HCT116 (cell line): ENCODE measurements at regions of chr2 and their contacts with region 1.

Region 1: DNA sequence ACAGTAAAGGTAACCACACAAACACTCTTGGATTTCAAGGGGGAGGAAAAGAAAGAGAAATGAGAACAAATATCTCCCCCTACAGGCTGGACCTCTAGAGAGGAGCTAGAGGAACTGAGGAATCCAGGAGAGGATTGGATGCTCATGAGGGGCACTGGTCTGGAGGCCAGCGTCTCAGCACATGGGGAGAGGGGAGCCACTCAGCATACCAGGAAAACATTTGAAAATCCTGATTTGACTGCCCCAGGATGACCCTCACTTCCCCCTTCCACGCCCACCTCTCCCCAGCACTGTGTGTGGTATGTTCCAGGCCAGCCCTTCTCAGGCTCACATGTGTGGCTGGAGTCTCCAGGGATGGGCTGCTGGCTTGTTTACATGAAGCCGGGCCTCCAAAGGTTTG is 396.8 kb upstream of the ID2 start:
- DNase-seq: peak; percentile 7
- ATAC-seq: peak; percentile 63
- H3K4me3 ChIP-seq: no peak overlapping the region
- H3K27ac ChIP-seq: no peak overlapping the region
- H3K4me1 ChIP-seq: peaks cover 0 to 9% of the 10 kb centered on the region in 2 experiments; a peak in 1 of 4 replicates
- H3K27me3 ChIP-seq: no peaks in the 10 kb centered on the region
- CTCF ChIP-seq: peak; percentile 4 to 51 (median 38); a peak in 4 of 6 replicates
- POLR2A ChIP-seq: no peak
- RAD21 ChIP-seq: peak; percentile 65

Region 2: DNA sequence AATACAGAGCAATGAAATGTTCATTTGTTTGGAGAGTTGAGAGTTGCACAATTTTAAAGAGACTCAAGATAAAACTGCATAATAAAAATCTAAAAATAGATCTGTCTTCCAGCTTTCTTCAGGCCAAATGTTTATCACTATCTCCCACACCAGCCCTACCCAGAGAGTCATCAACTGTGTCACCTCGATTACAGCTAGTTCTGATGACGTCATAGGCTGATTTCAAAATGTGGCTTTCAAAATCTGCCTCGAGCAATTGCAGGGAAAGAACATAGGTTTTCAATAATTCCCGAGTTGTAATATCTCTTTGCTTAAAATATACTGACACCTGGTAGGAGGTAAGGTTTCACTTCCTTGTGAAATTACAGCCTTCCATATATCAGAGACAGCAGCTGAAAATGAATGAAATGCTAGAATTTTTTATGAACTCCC is 280.8 kb before region 1 on chr2:
- CTCF ChIA-PET with region 1: no interaction called
- POLR2A ChIA-PET with region 1: no interaction called
- RAD21 ChIA-PET with region 1: no interaction called
- intact Hi-C with region 1: loop called (anchors 5 kb)
- DNase-seq: no peak
- ATAC-seq: no peak
- H3K4me3 ChIP-seq: no peak overlapping the region
- H3K27ac ChIP-seq: no peak overlapping the region
- H3K4me1 ChIP-seq: no peaks in the 10 kb centered on the region
- H3K27me3 ChIP-seq: no peaks in the 10 kb centered on the region
- CTCF ChIP-seq: no peak
- POLR2A ChIP-seq: no peak
- RAD21 ChIP-seq: no peak

Region 3: GRCh38 chr2:8049851-8050571 is 235.1 kb before region 1 on chr2:
- CTCF ChIA-PET with region 1: no interaction called
- POLR2A ChIA-PET with region 1: no interaction called
- RAD21 ChIA-PET with region 1: no interaction called
- intact Hi-C with region 1: no loop called
- DNase-seq: no peak
- ATAC-seq: peak; percentile 47; the same call in 1 of the 2 replicates
- H3K4me3 ChIP-seq: no peak overlapping the region
- H3K27ac ChIP-seq: no peak overlapping the region
- H3K4me1 ChIP-seq: peaks cover 0 to 6% of the 10 kb centered on the region in 2 experiments; a peak in 1 of 4 replicates
- H3K27me3 ChIP-seq: no peaks in the 10 kb centered on the region
- CTCF ChIP-seq: no peak
- POLR2A ChIP-seq: no peak
- RAD21 ChIP-seq: no peak